OCI-LY7 (cell line): ENCODE measurements at regions of chr22 and their contacts with region 1.

Region 1: GRCh38 chr22:33314316-33314715 is 256.1 kb upstream of the SYN3 start:
- DNase-seq: no peak
- H3K4me3 ChIP-seq: no peak overlapping the region
- H3K27ac ChIP-seq: no peak overlapping the region
- H3K4me1 ChIP-seq: peaks cover 31% of the 10 kb centered on the region
- CTCF ChIP-seq: no peak

Region 2: DNA sequence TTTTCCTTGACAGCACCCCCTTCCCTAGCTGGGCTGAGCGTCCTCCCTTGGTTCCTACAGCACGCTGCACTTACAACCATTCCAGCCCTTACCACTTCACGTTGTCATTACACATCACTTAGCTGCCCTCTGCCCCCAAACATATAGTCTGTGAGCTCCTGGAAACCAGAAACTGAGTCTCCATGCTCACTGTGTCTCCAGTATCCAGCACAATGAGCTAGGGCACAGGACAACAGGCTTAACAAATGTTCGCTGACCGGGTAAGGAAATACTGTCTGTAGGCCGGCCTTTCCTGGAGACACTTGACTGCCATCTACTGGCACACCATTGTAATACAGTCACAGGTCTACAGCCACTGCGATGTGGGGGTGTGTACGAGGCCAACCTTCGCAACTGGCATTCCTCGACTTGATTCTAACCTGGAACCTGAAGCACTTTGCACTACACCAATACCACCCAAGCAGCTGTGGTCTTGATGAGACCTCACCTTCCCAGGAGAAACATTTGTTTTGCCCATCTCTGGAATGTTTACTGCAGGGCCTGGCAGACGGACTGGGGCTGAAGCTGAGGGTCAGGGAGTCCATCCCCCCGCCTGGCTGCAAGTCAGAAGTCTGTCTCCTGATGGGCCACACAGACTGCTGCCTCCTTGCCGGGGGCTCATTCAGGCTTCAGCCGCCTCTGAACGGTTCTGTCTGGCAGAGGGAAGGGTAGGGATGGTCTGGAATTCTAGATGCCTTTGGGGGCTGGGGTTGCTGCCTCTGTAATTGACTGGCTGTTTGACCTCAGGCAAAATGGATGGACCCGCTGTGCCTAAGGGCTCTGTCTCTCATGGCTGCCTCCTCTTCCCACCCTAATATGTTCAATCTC is 328.2 kb before region 1 on chr22:
- CTCF ChIA-PET with region 1: no interaction called
- POLR2A ChIA-PET with region 1: no interaction called
- intact Hi-C with region 1: no loop called
- DNase-seq: peak; percentile 63
- H3K4me3 ChIP-seq: no peak overlapping the region
- H3K27ac ChIP-seq: no peak overlapping the region
- H3K4me1 ChIP-seq: no peaks in the 10 kb centered on the region
- CTCF ChIP-seq: peak; percentile 83

Region 3: GRCh38 chr22:33000342-33001280 is 313.7 kb before region 1 on chr22:
- CTCF ChIA-PET with region 1: no interaction called
- POLR2A ChIA-PET with region 1: no interaction called
- intact Hi-C with region 1: no loop called
- DNase-seq: peak; percentile 73
- H3K4me3 ChIP-seq: no peak overlapping the region
- H3K27ac ChIP-seq: no peak overlapping the region
- H3K4me1 ChIP-seq: peaks cover 15% of the 10 kb centered on the region
- CTCF ChIP-seq: peak; percentile 98

Region 4: DNA sequence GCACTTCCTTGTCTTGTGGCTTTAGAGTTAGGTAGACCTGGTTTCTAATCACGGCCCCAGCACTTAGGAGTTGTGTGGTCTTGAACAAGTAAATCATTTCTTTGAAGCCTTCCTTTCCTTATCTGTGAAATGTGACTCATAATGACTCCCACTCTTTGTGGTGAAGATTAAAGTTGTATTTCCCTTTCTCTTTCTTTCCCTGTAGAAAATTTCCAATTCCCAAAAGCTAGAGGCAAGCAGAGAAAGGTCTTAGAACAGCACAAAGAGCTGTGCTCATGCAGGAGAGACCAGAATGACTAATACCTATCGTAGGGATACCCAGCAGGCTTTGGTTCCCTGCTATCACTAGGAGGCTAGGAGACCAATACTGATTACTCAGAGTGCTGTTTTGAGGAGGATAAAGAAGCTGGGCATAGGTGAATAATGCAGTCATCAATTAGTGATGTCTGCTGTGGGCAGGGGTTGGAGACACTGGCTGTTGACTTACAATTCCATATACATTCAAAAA is 14.5 kb after region 1 on chr22:
- CTCF ChIA-PET with region 1: no interaction called
- POLR2A ChIA-PET with region 1: interaction called, 21 read pairs
- intact Hi-C with region 1: no loop called
- DNase-seq: no peak
- H3K4me3 ChIP-seq: no peak overlapping the region
- H3K27ac ChIP-seq: no peak overlapping the region
- H3K4me1 ChIP-seq: peaks cover 41% of the 10 kb centered on the region
- CTCF ChIP-seq: no peak